ENCODE measurements at regions of chr6 and their contacts with region 1.

Region 1: GRCh38 chr6:158879180-158879579 is 60.0 kb upstream of the EZR start:
- DNase-seq: peak; percentile 91
- H3K4me3 Mint-ChIP-seq: no peak overlapping the region
- H3K27ac Mint-ChIP-seq: peak overlapping the region; percentile 35
- H3K4me1 Mint-ChIP-seq: peaks cover 22% of the 10 kb centered on the region
- H3K27me3 Mint-ChIP-seq: peaks cover 1% of the 10 kb centered on the region

Region 2: DNA sequence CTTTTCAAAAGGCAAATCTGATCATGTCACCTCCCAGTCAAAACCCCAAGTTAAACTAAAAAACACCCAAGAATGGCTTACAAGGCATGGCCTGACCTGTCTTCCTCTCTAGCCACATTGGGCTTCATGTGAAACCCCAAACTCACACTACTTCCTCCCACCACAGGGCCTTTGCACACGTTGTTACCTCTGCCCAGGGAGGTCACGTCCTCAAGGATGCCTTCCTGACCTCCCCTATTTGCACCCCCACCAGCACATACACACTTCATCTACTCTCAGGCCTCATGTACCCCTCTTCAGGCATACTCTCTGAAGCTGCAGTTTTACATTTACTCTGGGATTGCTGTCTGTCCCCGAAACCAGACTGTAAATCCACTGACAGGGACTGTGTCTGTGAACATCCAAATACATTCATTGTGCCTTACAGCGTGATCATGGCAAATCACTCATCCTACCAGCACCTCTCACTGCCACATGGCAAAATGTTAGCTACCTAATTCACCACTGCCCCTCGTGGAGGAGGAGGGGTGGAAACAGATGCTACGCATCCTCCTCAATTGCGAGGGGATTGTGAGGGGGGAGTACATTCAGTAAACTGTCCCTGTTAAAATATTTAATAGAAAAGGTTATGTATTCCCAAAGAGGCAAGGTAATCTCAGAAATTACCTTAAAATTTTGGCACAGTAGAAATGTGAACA is 66.0 kb before region 1 on chr6:
- CTCF ChIA-PET with region 1: no interaction called
- POLR2A ChIA-PET with region 1: interaction called, 4 read pairs
- intact Hi-C with region 1: loop called (anchors 2 kb)
- DNase-seq: peak; percentile 39
- H3K4me3 Mint-ChIP-seq: peak overlapping the region; percentile 100
- H3K27ac Mint-ChIP-seq: peak overlapping the region; percentile 99
- H3K4me1 Mint-ChIP-seq: peaks cover 83% of the 10 kb centered on the region
- H3K27me3 Mint-ChIP-seq: no peaks in the 10 kb centered on the region

Region 3: GRCh38 chr6:158910484-158911348 is 31.5 kb after region 1 on chr6:
- CTCF ChIA-PET with region 1: no interaction called
- POLR2A ChIA-PET with region 1: no interaction called
- intact Hi-C with region 1: loop called (anchors 2 kb)
- DNase-seq: no peak
- H3K4me3 Mint-ChIP-seq: peak overlapping the region; percentile 52
- H3K27ac Mint-ChIP-seq: peak overlapping the region; percentile 31
- H3K4me1 Mint-ChIP-seq: peaks cover 27% of the 10 kb centered on the region
- H3K27me3 Mint-ChIP-seq: no peaks in the 10 kb centered on the region

Region 4: GRCh38 chr6:158926416-158926815 is 47.2 kb after region 1 on chr6:
- CTCF ChIA-PET with region 1: no interaction called
- POLR2A ChIA-PET with region 1: no interaction called
- intact Hi-C with region 1: no loop called
- DNase-seq: no peak
- H3K4me3 Mint-ChIP-seq: no peak overlapping the region
- H3K27ac Mint-ChIP-seq: no peak overlapping the region
- H3K4me1 Mint-ChIP-seq: no peaks in the 10 kb centered on the region
- H3K27me3 Mint-ChIP-seq: no peaks in the 10 kb centered on the region